SK-N-SH (cell line): ENCODE measurements at regions of chr1 and their contacts with region 1.

Region 1: DNA sequence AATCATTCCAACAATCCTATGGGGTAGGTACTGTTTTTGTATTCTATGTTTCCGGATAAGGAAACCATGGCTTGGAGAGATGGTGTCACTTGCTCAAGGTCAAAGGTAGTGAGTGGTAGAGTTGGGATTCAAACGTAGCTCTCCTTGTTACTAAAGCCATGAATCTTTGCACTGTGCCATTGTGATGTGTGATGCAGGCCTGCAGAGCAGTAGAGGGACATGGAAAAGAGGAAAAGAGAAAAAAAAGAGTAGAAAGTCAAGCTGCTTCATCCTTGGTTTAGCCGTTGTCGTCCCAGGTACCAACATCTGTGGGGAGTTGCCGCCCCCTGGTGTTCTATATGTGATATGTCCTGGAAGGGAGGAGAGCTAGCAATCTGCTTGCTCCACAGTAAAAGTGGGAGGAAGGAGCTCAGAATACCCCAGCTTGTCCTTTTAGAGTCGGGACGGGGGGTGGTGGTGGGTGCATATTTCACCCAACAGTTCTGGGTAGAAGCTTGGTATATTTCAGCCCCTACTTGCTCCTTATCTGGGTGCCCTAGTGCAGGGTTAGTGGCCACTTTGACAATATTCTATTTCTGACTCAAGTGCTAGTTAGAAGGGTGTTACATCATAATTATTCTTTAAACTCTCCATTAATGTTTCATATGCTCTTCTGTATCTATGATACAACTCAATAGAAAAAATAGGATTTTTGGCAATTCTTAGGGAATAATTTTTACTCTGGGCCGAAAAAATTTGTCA is 98.4 kb downstream of the EBNA1BP2 start:
- DNase-seq: peak; percentile 81
- H3K4me3 ChIP-seq: no peak overlapping the region; a peak in 1 of 4 replicates
- H3K27ac ChIP-seq: no peak overlapping the region
- H3K4me1 ChIP-seq: peaks cover 0 to 10% of the 10 kb centered on the region in 2 experiments; a peak in 1 of 4 replicates
- H3K27me3 ChIP-seq: no peaks in the 10 kb centered on the region
- CTCF ChIP-seq: peak; percentile 82
- EP300 ChIP-seq: no peak
- RAD21 ChIP-seq: peak; percentile 99

Region 2: GRCh38 chr1:42822800-42823392 is 250.8 kb before region 1 on chr1:
- CTCF ChIA-PET with region 1: interaction called, 13 read pairs
- POLR2A ChIA-PET with region 1: no interaction called
- DNase-seq: peak; percentile 43
- H3K4me3 ChIP-seq: no peak overlapping the region
- H3K27ac ChIP-seq: peak overlapping the region; percentile 63 to 83; a peak in 3 of 4 replicates
- H3K4me1 ChIP-seq: peaks cover 19 to 22% of the 10 kb centered on the region in 2 experiments; a peak in 3 of 4 replicates
- H3K27me3 ChIP-seq: no peaks in the 10 kb centered on the region
- CTCF ChIP-seq: no peak
- EP300 ChIP-seq: peak; percentile 64 to 66; a peak in 3 of 4 replicates
- RAD21 ChIP-seq: no peak

Region 3: GRCh38 chr1:42924082-42924850 is 149.4 kb before region 1 on chr1:
- CTCF ChIA-PET with region 1: interaction called, 607 read pairs
- POLR2A ChIA-PET with region 1: interaction called, 22 read pairs
- DNase-seq: peak; percentile 96
- H3K4me3 ChIP-seq: peak overlapping the region; percentile 66 to 73
- H3K27ac ChIP-seq: peak overlapping the region; percentile 64 to 82
- H3K4me1 ChIP-seq: peaks cover 0 to 11% of the 10 kb centered on the region in 2 experiments; a peak in 3 of 4 replicates
- H3K27me3 ChIP-seq: no peaks in the 10 kb centered on the region
- CTCF ChIP-seq: peak; percentile 29; the same call in 1 of the 2 replicates
- EP300 ChIP-seq: no peak
- RAD21 ChIP-seq: no peak

Region 4: GRCh38 chr1:42952303-42953001 is 121.2 kb before region 1 on chr1:
- CTCF ChIA-PET with region 1: interaction called, 33 read pairs
- POLR2A ChIA-PET with region 1: interaction called, 3 read pairs
- DNase-seq: no peak
- H3K4me3 ChIP-seq: no peak overlapping the region
- H3K27ac ChIP-seq: peak overlapping the region in 1 of 2 experiments; percentile 78; a peak in 1 of 4 replicates
- H3K4me1 ChIP-seq: peaks cover 30 to 57% of the 10 kb centered on the region in 2 experiments
- H3K27me3 ChIP-seq: no peaks in the 10 kb centered on the region
- CTCF ChIP-seq: no peak
- EP300 ChIP-seq: no peak
- RAD21 ChIP-seq: no peak

Region 5: DNA sequence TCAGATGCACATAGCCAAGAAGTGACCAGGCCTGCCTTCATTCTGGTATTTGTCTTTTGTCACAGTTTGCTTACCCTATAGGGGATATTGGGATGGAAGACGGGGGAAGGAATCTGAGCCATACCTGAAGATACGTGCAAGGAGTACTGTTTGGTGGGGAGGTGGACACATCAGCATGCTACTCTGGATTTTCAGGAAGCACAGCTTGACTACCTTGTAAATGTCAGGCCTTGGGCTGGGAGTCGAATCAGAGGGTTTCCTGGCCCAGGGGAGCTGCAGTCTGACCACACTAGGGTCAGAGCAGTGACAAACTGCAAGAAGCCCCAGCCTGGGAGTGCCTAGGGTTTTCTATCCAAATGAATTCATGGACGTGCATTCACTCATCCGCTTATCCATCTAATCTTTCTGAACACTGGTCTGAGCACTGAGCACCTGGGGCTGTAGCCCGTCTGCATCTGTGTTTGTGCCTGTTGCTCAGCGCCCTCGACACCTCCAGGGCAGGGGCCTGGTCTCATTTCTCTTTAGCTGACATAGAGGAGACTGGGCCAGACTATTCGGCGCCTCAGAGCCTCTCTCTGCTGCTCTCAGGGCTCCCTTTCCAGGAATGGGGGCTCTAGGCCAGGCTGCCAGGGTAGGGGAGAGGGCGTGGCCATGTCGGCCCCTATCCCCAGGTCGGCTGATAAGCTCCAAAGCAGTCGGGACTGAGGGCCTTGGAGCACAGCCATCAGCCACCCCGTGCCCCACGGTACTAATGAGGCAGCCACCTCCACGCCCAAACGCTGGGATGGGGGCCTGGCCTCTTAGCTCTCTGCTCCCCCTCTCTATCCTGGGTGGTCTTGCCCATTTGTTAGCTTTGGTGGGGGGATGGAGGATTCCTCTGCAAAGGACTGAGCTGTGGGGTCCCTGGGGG is 68.0 kb before region 1 on chr1:
- CTCF ChIA-PET with region 1: interaction called, 14 read pairs
- POLR2A ChIA-PET with region 1: interaction called, 3 read pairs
- DNase-seq: peak; percentile 90
- H3K4me3 ChIP-seq: no peak overlapping the region
- H3K27ac ChIP-seq: peak overlapping the region in 1 of 2 experiments; percentile 96; a peak in 2 of 4 replicates
- H3K4me1 ChIP-seq: peaks cover 0 to 22% of the 10 kb centered on the region in 2 experiments; a peak in 2 of 4 replicates
- H3K27me3 ChIP-seq: no peaks in the 10 kb centered on the region
- CTCF ChIP-seq: no peak
- EP300 ChIP-seq: peak in 1 of 2 experiments; percentile 94; a peak in 2 of 4 replicates
- RAD21 ChIP-seq: peak; percentile 36; the same call in 1 of the 2 replicates